IMR-90 (cell line): ENCODE measurements at regions of chr1 and their contacts with region 1.

Region 1: DNA sequence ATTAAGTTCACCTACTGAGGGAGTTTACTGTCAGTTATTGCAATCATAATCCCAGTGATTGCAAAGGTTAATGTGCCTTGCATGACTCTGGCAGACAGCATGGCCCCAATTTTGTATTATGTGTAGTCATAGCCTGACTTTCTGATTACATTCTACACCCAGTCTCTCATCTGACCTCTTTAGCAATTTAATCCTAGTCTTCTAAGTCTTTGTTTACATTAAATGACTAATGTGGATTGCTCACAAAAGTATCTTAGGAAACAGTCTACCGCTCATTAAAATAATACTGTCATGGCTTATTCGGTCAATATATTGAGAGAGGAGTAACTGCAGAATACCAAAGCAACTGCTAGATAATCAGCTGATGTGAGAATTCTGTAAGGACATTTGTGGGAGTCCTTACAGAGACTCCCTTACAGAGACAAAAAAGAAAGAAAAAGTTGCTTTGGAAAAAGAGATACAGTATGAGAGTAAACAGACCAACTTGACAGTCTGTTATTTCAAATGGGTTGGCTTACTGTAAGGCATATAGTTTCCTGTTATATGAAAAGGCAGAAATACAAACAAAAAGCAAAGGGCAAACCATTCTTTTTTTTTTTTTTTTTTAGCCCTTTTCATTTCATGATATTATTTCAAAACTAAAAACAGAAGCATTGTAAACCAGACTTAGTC is 42.9 kb downstream of the SMG7 start:
- DNase-seq: peak; percentile 93
- ATAC-seq: peak; percentile 94
- H3K4me3 ChIP-seq: no peak overlapping the region
- H3K27ac ChIP-seq: no peak overlapping the region
- H3K4me1 ChIP-seq: peaks cover 4% of the 10 kb centered on the region; the same call in 1 of the 2 replicates
- H3K27me3 ChIP-seq: no peaks in the 10 kb centered on the region
- CTCF ChIP-seq: no peak
- POLR2A ChIP-seq: no peak
- RAD21 ChIP-seq: no peak

Region 2: DNA sequence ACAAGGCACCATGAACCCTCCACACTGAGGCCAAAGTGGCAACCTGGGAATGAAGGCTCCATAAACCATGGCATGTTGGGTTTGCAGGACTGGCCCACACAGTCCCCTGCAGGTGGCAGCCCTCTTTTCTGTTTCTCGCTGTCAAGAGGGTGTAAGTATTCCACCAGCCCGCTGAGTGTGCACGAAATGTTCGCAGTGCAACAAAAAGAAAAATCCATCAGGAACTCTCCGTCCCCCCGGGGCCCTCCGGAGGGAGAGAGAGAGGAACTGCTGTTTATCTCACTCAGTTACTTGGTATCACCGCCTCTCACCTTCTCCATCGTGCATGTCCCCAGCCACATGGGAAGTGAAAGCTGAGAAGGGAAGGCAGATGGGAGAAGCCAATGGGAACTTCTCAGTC is 36.8 kb after region 1 on chr1:
- CTCF ChIA-PET with region 1: no interaction called
- POLR2A ChIA-PET with region 1: no interaction called
- dilution Hi-C with region 1: no loop called
- in situ Hi-C with region 1: no loop called
- intact Hi-C with region 1: loop called (anchors 5 kb)
- DNase-seq: no peak
- ATAC-seq: no peak
- H3K4me3 ChIP-seq: no peak overlapping the region
- H3K27ac ChIP-seq: no peak overlapping the region
- H3K4me1 ChIP-seq: peaks cover 3% of the 10 kb centered on the region
- H3K27me3 ChIP-seq: no peaks in the 10 kb centered on the region
- CTCF ChIP-seq: no peak
- POLR2A ChIP-seq: no peak
- RAD21 ChIP-seq: no peak